CD8-positive, alpha-beta T cell (primary cell): ENCODE measurements at regions of chr10 and their contacts with region 1.

Region 1: GRCh38 chr10:18659120-18659818 is at the start of gene ARL5B:
- DNase-seq: peak; percentile 94 to 99 (median 96)
- ATAC-seq: peak; percentile 96
- H3K4me3 ChIP-seq: peak within 1 kb of the TSS; percentile 74 to 98
- H3K4me3 Mint-ChIP-seq: peak within 1 kb of the TSS; percentile 100
- H3K27ac ChIP-seq: peak within 1 kb of the TSS; percentile 90 to 92
- H3K27ac Mint-ChIP-seq: peak within 1 kb of the TSS; percentile 99
- H3K4me1 ChIP-seq: peaks cover 28% of the 10 kb centered on the region
- H3K4me1 Mint-ChIP-seq: peaks cover 55% of the 10 kb centered on the region
- H3K27me3 ChIP-seq: no peaks in the 10 kb centered on the region
- H3K27me3 Mint-ChIP-seq: no peaks in the 10 kb centered on the region
- CTCF ChIP-seq: no peak
- total RNA-seq, gene ARL5B: 12.2 to 12.4 TPM

Region 2: DNA sequence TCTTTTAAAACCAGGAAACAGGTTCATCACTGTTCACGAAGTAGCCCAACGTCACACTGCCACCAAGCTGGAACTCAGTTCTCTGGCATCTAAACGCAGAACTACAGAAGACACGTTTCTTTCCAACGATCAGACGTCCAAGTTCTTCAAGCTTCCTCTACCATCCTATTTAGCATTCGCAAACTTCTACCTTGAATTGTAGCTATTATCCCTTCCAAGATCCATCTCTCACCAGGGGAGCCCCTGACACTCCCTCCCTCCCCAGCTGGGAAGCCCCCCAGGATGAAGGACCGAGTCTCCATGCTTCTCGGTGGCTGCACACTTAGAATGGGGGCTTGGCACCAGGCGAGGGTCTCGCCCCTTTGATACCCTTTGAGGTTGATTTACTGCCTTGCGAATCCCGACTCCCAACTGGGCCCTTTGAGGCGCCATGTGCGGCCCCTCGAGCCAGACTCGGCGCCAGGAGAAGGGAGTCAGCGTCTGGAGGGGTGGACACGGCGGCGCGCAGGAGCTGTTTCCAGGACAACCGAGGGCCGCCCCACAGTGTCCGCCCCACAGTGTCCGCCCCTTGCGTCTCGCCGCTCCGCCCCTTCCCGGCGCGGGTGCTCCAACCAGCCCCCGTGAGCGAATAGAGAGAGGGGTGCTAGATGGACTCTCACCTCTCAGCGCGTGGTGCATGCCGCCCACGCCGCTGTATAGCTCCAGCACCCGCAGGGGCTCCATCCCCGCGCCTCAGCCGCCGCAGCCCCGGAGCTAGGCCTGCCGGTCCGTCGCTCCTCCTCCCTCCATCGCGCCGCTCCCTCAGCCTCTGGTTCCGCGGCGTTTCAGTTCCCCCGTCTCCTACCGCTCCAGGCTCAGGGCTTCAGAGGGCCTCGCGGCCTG is 1458.1 kb before region 1 on chr10 and contains the start of gene TRDMT1:
- CTCF ChIA-PET with region 1: no interaction called
- POLR2A ChIA-PET with region 1: no interaction called
- intact Hi-C with region 1: loop called in 1 of 2 experiments (anchors 10 kb)
- DNase-seq: peak; percentile 66 to 87 (median 76)
- ATAC-seq: peak; percentile 77
- H3K4me3 ChIP-seq: peak within 1 kb of the TSS; percentile 69 to 83
- H3K4me3 Mint-ChIP-seq: peak within 1 kb of the TSS; percentile 98
- H3K27ac ChIP-seq: peak within 1 kb of the TSS; percentile 80 to 92
- H3K27ac Mint-ChIP-seq: peak within 1 kb of the TSS; percentile 97
- H3K4me1 ChIP-seq: peaks cover 21% of the 10 kb centered on the region
- H3K4me1 Mint-ChIP-seq: peaks cover 35% of the 10 kb centered on the region
- H3K27me3 ChIP-seq: no peaks in the 10 kb centered on the region
- H3K27me3 Mint-ChIP-seq: no peaks in the 10 kb centered on the region
- CTCF ChIP-seq: no peak
- total RNA-seq, gene TRDMT1: 10.4 to 11.7 TPM

Region 3: DNA sequence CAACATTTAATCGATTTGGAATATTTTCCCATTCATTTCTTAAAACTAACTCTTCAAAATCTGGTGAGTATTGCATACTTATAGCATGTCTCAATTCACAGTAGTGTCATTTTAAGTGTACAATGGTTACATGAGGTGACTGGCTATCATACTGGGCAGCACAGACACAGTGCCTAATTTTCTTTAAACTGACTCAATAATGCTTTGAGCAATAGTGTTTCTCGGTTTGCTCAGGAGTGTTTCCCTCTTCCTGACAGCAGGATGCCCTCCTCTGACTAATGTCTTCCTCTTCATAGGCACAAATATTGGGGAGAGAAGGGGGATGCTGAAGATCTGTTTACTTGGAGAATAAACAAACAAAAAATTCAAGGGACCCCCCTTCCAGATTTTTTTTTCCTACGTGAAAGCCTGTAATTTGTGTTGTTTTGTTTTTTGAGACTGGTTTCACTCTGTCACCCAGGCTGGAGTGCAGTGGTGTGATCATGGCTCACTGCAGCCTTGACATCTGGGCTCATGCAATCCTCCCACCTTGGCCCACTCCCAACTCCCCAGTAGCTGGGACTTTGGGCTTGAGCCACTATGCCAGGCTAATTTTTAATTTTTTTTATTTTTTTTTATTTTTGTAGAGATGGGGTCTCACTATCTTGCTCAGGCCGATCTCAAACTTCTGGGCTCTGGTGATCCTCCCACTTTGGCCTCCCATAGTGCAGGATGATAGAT is 848.0 kb before region 1 on chr10:
- CTCF ChIA-PET with region 1: no interaction called
- POLR2A ChIA-PET with region 1: no interaction called
- intact Hi-C with region 1: no loop called
- DNase-seq: no peak
- ATAC-seq: no peak
- H3K4me3 ChIP-seq: no peak overlapping the region
- H3K4me3 Mint-ChIP-seq: no peak overlapping the region
- H3K27ac ChIP-seq: no peak overlapping the region
- H3K27ac Mint-ChIP-seq: no peak overlapping the region
- H3K4me1 ChIP-seq: no peaks in the 10 kb centered on the region
- H3K4me1 Mint-ChIP-seq: no peaks in the 10 kb centered on the region
- H3K27me3 ChIP-seq: no peaks in the 10 kb centered on the region
- H3K27me3 Mint-ChIP-seq: peaks cover 21% of the 10 kb centered on the region
- CTCF ChIP-seq: no peak

Region 4: DNA sequence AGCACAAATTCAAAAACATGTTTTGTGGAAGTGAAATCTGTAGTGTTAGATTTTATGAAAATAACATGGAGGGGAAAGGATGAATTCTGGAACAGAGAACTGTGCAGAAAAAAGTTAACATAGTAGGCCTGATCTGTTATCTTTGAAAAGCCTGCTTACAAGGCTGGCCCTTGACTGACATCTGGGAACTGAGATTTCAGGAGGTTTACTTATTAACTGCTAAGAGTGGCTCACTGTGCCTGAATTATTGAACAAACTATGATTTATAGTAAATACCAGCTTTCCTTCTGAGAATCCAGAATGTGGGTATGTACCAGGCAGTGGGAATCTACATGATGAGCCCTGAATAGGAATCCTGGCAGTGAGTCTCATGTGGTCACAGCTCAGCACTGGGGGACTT is 38.4 kb before region 1 on chr10:
- CTCF ChIA-PET with region 1: no interaction called
- POLR2A ChIA-PET with region 1: no interaction called
- intact Hi-C with region 1: loop called in 1 of 2 experiments (anchors 5 kb)
- DNase-seq: no peak
- ATAC-seq: no peak
- H3K4me3 ChIP-seq: no peak overlapping the region
- H3K4me3 Mint-ChIP-seq: no peak overlapping the region
- H3K27ac ChIP-seq: no peak overlapping the region
- H3K27ac Mint-ChIP-seq: no peak overlapping the region
- H3K4me1 ChIP-seq: no peaks in the 10 kb centered on the region
- H3K4me1 Mint-ChIP-seq: no peaks in the 10 kb centered on the region
- H3K27me3 ChIP-seq: no peaks in the 10 kb centered on the region
- H3K27me3 Mint-ChIP-seq: no peaks in the 10 kb centered on the region
- CTCF ChIP-seq: no peak

Region 5: DNA sequence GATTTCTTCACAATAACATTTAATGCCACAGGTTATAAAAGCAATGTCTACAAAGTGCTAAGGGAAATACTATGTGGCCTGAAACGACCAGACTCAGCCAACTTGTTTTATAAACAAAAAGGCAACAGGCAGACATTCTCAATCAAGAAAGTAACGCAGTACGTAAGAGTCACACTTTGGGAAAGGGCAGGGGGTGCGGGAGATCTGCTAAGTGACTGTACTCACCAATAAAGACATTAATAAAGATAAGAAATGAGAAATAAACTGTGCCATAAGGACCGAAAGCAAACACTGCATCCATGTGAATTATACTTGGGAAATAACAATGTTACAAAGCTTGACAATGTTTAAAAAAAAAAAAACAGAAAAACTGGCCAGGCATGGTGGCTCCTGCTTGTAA is 33.4 kb before region 1 on chr10:
- CTCF ChIA-PET with region 1: no interaction called
- POLR2A ChIA-PET with region 1: interaction called, 3 read pairs
- intact Hi-C with region 1: loop called (anchors 1 to 5 kb)
- DNase-seq: no peak
- ATAC-seq: no peak
- H3K4me3 ChIP-seq: no peak overlapping the region
- H3K4me3 Mint-ChIP-seq: no peak overlapping the region
- H3K27ac ChIP-seq: no peak overlapping the region
- H3K27ac Mint-ChIP-seq: no peak overlapping the region
- H3K4me1 ChIP-seq: peaks cover 5% of the 10 kb centered on the region
- H3K4me1 Mint-ChIP-seq: peaks cover 12% of the 10 kb centered on the region
- H3K27me3 ChIP-seq: no peaks in the 10 kb centered on the region
- H3K27me3 Mint-ChIP-seq: no peaks in the 10 kb centered on the region
- CTCF ChIP-seq: no peak

Region 6: GRCh38 chr10:18675086-18675801 is 16.0 kb after region 1 on chr10:
- CTCF ChIA-PET with region 1: no interaction called
- POLR2A ChIA-PET with region 1: no interaction called
- intact Hi-C with region 1: no loop called
- DNase-seq: no peak
- ATAC-seq: no peak
- H3K4me3 ChIP-seq: no peak overlapping the region
- H3K4me3 Mint-ChIP-seq: no peak overlapping the region
- H3K27ac ChIP-seq: no peak overlapping the region
- H3K27ac Mint-ChIP-seq: no peak overlapping the region
- H3K4me1 ChIP-seq: no peaks in the 10 kb centered on the region
- H3K4me1 Mint-ChIP-seq: peaks cover 8% of the 10 kb centered on the region
- H3K27me3 ChIP-seq: no peaks in the 10 kb centered on the region
- H3K27me3 Mint-ChIP-seq: no peaks in the 10 kb centered on the region
- CTCF ChIP-seq: no peak